B cell (primary cell): ENCODE measurements at regions of chr15 and their contacts with region 1.

Region 1: GRCh38 chr15:92808978-92809879 is 90.9 kb upstream of the CHD2 start:
- DNase-seq: peak; percentile 100
- ATAC-seq: peak; percentile 81
- H3K4me3 ChIP-seq: peak overlapping the region; percentile 66 to 94 (median 76)
- H3K4me3 Mint-ChIP-seq: peak overlapping the region; percentile 92
- H3K27ac ChIP-seq: peak overlapping the region; percentile 96 to 99
- H3K27ac Mint-ChIP-seq: peak overlapping the region; percentile 99
- H3K4me1 ChIP-seq: peaks cover 21 to 25% of the 10 kb centered on the region in 2 donors
- H3K4me1 Mint-ChIP-seq: peaks cover 32% of the 10 kb centered on the region
- H3K27me3 ChIP-seq: no peaks in the 10 kb centered on the region
- H3K27me3 Mint-ChIP-seq: no peaks in the 10 kb centered on the region
- CTCF ChIP-seq: peak; percentile 96

Region 2: DNA sequence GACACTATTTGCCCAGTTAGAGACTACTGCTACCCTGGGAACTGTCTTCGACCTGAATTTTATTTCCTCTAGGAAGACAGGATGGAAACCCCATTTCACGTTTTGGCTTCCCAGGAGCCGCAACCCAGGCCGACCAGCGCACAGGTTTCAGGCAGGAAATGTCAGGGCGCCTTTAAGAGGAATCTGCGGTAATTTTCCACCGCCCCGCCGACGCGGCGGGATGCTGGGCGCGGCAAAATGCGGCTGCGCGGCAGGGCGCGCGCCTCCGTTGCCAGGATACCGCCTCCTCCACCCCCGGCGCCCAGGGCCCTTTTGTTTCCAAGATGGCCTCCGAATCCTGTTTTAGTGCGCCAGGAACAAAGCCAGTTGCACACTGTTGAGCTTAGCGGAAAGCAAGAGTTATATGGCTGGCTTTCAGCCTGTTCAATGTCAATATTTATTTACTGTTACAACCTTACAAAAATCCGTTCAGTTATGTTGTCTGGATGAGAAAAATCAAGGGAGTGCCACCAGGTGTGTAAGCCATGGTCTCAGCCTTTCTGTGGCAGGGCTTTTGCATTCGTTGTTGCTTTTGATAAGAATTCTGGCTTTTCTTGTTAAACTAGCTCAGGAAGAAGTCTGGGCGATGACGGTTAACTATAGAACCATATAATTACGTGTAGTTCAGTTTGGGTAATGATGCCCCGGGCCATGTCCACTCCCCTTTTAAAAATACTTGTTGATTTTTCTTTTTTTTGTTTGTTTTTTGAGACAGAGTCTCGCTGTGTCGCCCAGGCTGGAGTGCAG is 11.2 kb after region 1 on chr15:
- CTCF ChIA-PET with region 1: interaction called, 24 read pairs
- POLR2A ChIA-PET with region 1: interaction called, 26 read pairs
- intact Hi-C with region 1: loop called (anchors 1 kb)
- DNase-seq: peak; percentile 90
- ATAC-seq: peak; percentile 80
- H3K4me3 ChIP-seq: peak overlapping the region; percentile 58 to 92 (median 75)
- H3K4me3 Mint-ChIP-seq: peak overlapping the region; percentile 90
- H3K27ac ChIP-seq: peak overlapping the region; percentile 82 to 83
- H3K27ac Mint-ChIP-seq: peak overlapping the region; percentile 95
- H3K4me1 ChIP-seq: peaks cover 25 to 49% of the 10 kb centered on the region in 2 donors
- H3K4me1 Mint-ChIP-seq: peaks cover 60% of the 10 kb centered on the region
- H3K27me3 ChIP-seq: no peaks in the 10 kb centered on the region
- H3K27me3 Mint-ChIP-seq: no peaks in the 10 kb centered on the region
- CTCF ChIP-seq: no peak

Region 3: DNA sequence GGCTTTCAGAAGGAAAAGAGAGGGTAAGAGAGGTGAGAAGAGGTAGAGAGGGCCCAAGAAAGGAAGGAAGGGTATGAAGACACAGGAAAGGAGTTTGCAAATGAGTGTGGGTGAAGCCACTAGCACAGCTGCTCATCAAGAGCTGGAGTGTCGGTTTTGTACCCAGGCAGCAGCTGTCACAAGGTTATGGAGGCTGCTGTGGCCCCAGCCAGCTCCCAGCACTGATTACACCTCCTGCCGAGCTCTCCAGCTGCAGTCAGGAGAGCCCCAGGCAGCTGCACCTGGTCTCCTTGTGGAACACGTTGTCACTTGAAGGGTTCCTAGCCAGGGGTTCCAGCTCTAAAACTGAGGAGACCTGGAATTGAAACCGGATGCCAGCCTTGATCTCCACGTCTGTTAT is 30.5 kb after region 1 on chr15:
- CTCF ChIA-PET with region 1: interaction called, 8 read pairs
- POLR2A ChIA-PET with region 1: interaction called, 12 read pairs
- intact Hi-C with region 1: no loop called
- DNase-seq: peak; percentile 20
- ATAC-seq: peak; percentile 47
- H3K4me3 ChIP-seq: peak overlapping the region in 3 of 5 experiments; percentile 5 to 38 (median 25)
- H3K4me3 Mint-ChIP-seq: peak overlapping the region; percentile 77
- H3K27ac ChIP-seq: peak overlapping the region; percentile 39 to 73
- H3K27ac Mint-ChIP-seq: peak overlapping the region; percentile 95
- H3K4me1 ChIP-seq: peaks cover 26 to 37% of the 10 kb centered on the region in 2 donors
- H3K4me1 Mint-ChIP-seq: peaks cover 45% of the 10 kb centered on the region
- H3K27me3 ChIP-seq: no peaks in the 10 kb centered on the region
- H3K27me3 Mint-ChIP-seq: no peaks in the 10 kb centered on the region
- CTCF ChIP-seq: no peak

Region 4: DNA sequence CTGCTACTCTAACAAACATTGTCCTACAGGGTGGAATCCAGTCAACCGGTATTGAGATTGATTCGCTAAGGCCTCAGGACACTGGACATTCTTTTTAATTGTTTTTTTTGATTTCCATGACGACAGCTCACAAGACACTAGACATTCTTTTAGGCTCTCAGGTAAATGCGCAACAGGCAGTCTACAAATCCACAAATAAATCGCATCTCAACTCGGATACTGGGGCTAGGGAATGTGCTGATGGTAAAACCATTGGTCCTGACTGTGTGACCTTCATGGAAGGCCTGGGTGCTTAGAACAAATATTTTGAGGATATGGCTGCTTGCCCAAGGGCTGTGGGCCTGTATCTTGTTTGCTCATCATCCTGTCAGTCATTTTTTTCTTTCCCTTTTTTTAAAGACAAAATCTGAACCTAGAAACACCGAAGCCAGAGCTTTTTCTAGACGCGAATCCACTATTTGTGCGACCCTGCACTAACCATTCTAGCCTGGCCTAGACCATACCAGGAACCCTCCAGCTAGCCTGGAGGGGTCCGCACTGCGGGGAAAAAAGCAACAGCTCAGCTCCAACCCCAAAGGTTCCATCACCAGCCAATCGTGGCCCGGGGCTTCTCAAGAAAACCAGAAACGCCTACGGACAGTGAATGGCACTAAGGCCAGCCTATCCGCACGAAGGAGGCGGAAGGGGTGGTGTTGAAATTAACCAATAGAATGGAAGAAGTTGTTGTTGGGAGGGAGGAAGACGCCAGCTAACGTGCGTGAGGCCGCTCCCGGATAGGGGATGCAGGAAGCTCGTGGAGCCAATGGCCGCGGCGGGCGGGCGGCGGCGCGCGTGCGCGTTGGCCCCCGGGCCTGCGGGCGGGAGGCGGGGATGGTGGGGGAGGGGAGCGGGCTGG is 72.8 kb after region 1 on chr15:
- CTCF ChIA-PET with region 1: interaction called, 75 read pairs
- POLR2A ChIA-PET with region 1: interaction called, 266 read pairs
- intact Hi-C with region 1: loop called (anchors 1 kb)
- DNase-seq: peak; percentile 99
- ATAC-seq: peak; percentile 90
- H3K4me3 ChIP-seq: peak overlapping the region; percentile 43 to 77 (median 56)
- H3K4me3 Mint-ChIP-seq: peak overlapping the region; percentile 93
- H3K27ac ChIP-seq: peak overlapping the region; percentile 88 to 89
- H3K27ac Mint-ChIP-seq: peak overlapping the region; percentile 99
- H3K4me1 ChIP-seq: peaks cover 28 to 36% of the 10 kb centered on the region in 2 donors
- H3K4me1 Mint-ChIP-seq: peaks cover 41% of the 10 kb centered on the region
- H3K27me3 ChIP-seq: no peaks in the 10 kb centered on the region
- H3K27me3 Mint-ChIP-seq: no peaks in the 10 kb centered on the region
- CTCF ChIP-seq: no peak

Region 5: GRCh38 chr15:92896561-92896960 is 87.3 kb after region 1 on chr15:
- CTCF ChIA-PET with region 1: interaction called, 83 read pairs
- POLR2A ChIA-PET with region 1: interaction called, 164 read pairs
- intact Hi-C with region 1: loop called (anchors 1 kb)
- DNase-seq: no peak
- ATAC-seq: no peak
- H3K4me3 ChIP-seq: no peak overlapping the region
- H3K4me3 Mint-ChIP-seq: no peak overlapping the region
- H3K27ac ChIP-seq: peak overlapping the region; percentile 23 to 80
- H3K27ac Mint-ChIP-seq: peak overlapping the region; percentile 2
- H3K4me1 ChIP-seq: peaks cover 6 to 29% of the 10 kb centered on the region in 2 donors
- H3K4me1 Mint-ChIP-seq: peaks cover 41% of the 10 kb centered on the region
- H3K27me3 ChIP-seq: no peaks in the 10 kb centered on the region
- H3K27me3 Mint-ChIP-seq: no peaks in the 10 kb centered on the region
- CTCF ChIP-seq: no peak

Region 6: GRCh38 chr15:92917606-92918407 is 108.6 kb after region 1 on chr15:
- CTCF ChIA-PET with region 1: interaction called, 96 read pairs
- POLR2A ChIA-PET with region 1: interaction called, 32 read pairs
- intact Hi-C with region 1: loop called (anchors 1 kb)
- DNase-seq: peak; percentile 94
- ATAC-seq: peak; percentile 44
- H3K4me3 ChIP-seq: peak overlapping the region in 1 of 5 experiments; percentile 8
- H3K4me3 Mint-ChIP-seq: peak overlapping the region; percentile 74
- H3K27ac ChIP-seq: peak overlapping the region; percentile 83 to 93
- H3K27ac Mint-ChIP-seq: peak overlapping the region; percentile 93
- H3K4me1 ChIP-seq: peaks cover 73 to 77% of the 10 kb centered on the region in 2 donors
- H3K4me1 Mint-ChIP-seq: peaks cover 80% of the 10 kb centered on the region
- H3K27me3 ChIP-seq: no peaks in the 10 kb centered on the region
- H3K27me3 Mint-ChIP-seq: no peaks in the 10 kb centered on the region
- CTCF ChIP-seq: peak; percentile 95